Heart right ventricle (tissue), 16 donors: ENCODE measurements at regions of chr2 and their contacts with region 1.

Region 1: GRCh38 chr2:20282916-20283592 is 58.1 kb upstream of the SDC1 start:
- DNase-seq: peak; percentile 74 to 76
- ATAC-seq: peak; percentile 76 to 91 (median 84)
- H3K4me3 ChIP-seq: no peak overlapping the region
- H3K27ac ChIP-seq: no peak overlapping the region
- H3K4me1 ChIP-seq: peaks cover 0 to 25% (median 12%) of the 10 kb centered on the region in 9 donors
- H3K27me3 ChIP-seq: no peaks in the 10 kb centered on the region
- CTCF ChIP-seq: no peak

Region 2: GRCh38 chr2:20326163-20326780 is 43.2 kb after region 1 on chr2:
- intact Hi-C with region 1: loop called in 1 of 10 experiments (anchors 2 kb)
- DNase-seq: peak in 1 of 2 donors; percentile 38
- ATAC-seq: peak; percentile 51 to 75 (median 63)
- H3K4me3 ChIP-seq: no peak overlapping the region
- H3K27ac ChIP-seq: no peak overlapping the region
- H3K4me1 ChIP-seq: peaks cover 0 to 63% (median 24%) of the 10 kb centered on the region in 9 donors
- H3K27me3 ChIP-seq: no peaks in the 10 kb centered on the region
- CTCF ChIP-seq: peak; percentile 21 to 83 (median 74)

Region 3: GRCh38 chr2:20422402-20423271 is 139.6 kb after region 1 on chr2:
- intact Hi-C with region 1: no loop called
- DNase-seq: peak; percentile 47 to 49
- ATAC-seq: peak; percentile 23 to 63 (median 36)
- H3K4me3 ChIP-seq: no peak overlapping the region
- H3K27ac ChIP-seq: peak overlapping the region in 9 of 10 donors; percentile 1 to 80 (median 43)
- H3K4me1 ChIP-seq: peaks cover 6 to 68% (median 32%) of the 10 kb centered on the region in 9 donors
- H3K27me3 ChIP-seq: no peaks in the 10 kb centered on the region
- CTCF ChIP-seq: peak in 6 of 9 donors; percentile 7 to 40 (median 28)